Activated T-helper 1 cell treated with anti-CD3 and anti-CD28 coated beads, Interleukin-12 subunit alpha, Interleukin-12 subunit beta, Interleukin-2, Interleukin-4 antibody, amounts not matched to agents 30 ng/mL and 10 ng/mL and 1 ng/mL, durations not matched to agents 14 hours and 24 hours and 36 hours (primary cell): ENCODE measurements at regions of chr13 and their contacts with region 1.

Region 1: DNA sequence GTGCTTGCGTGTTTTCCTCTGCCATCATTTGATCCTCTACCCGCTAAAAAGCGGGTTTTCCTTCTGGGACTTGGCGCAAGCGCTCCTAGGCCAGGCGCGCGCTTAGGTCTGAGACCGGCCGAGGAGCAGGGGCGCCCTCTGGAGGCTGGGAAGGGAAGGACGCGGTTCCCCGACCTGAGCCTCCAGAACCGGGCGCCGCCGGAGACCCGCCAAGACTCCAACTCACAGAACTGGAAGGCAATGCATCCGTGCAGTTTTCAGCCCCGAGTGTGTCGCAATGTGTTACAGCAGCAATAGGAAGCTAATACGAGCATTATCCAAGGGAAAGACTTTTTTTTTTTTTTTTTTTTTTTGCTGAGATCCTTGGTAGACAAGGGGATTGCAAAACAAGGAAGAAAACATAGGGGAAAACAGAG is 190.9 kb downstream of the COL4A1 start:
- DNase-seq: peak; percentile 10
- H3K4me3 Mint-ChIP-seq: no peak overlapping the region
- H3K27ac Mint-ChIP-seq: no peak overlapping the region
- H3K4me1 Mint-ChIP-seq: no peaks in the 10 kb centered on the region
- H3K27me3 Mint-ChIP-seq: peaks cover 5% of the 10 kb centered on the region

Region 2: DNA sequence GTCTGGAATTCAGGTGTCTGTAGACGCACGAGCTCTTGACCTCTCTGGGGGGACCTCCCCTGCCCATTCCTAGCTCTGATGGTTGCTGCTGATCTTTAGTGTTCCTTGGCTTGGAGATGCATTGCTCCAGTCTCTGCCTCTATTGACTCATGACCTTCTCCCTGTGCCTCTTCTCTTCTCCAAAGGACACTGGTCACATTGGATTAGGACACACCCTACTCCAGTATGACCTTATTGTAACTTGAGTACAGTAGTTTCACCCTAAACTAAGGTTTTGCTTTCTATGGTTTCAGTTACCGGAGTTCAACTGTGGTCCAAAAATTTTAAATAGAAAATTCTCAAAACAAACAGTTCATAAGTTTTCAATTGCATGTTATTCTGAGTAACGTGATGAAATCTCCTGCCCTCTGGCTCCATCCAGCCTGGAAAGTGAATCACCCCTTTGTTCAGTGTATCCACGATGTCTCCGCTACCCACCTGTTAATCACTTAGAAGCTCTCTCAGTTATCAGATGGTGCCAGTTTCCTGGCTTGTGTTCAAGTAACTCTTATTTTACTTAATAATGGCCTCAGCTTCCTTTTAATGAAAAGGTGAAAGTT is 1213.4 kb before region 1 on chr13:
- intact Hi-C with region 1: no loop called
- DNase-seq: no peak
- H3K4me3 Mint-ChIP-seq: no peak overlapping the region
- H3K27ac Mint-ChIP-seq: no peak overlapping the region
- H3K4me1 Mint-ChIP-seq: peaks cover 7% of the 10 kb centered on the region
- H3K27me3 Mint-ChIP-seq: peaks cover 19% of the 10 kb centered on the region

Region 3: GRCh38 chr13:108961542-108962125 is 1154.4 kb before region 1 on chr13:
- intact Hi-C with region 1: loop called (anchors 1 kb)
- DNase-seq: no peak
- H3K4me3 Mint-ChIP-seq: no peak overlapping the region
- H3K27ac Mint-ChIP-seq: no peak overlapping the region
- H3K4me1 Mint-ChIP-seq: peaks cover 4% of the 10 kb centered on the region
- H3K27me3 Mint-ChIP-seq: peaks cover 4% of the 10 kb centered on the region

Region 4: DNA sequence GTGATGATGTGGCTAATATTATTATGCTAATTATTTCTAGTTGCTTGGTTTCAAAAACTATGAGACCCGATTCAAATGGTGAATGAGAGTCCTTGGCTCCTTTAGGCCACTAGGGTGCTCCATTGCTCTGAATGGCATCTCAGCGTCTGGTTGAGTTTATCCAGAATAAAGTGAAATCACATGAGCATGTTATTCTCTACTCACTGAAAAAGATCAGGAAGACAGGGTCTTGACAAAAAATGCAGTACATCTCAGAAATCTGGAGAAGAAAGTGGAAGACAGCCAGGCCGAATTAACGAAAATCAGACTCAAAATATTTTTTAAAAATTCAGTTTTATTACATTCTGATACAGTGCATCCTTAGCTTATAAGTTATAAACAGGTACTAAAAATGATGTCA is 970.4 kb before region 1 on chr13:
- intact Hi-C with region 1: loop called (anchors 10 kb)
- DNase-seq: no peak
- H3K4me3 Mint-ChIP-seq: no peak overlapping the region
- H3K27ac Mint-ChIP-seq: no peak overlapping the region
- H3K4me1 Mint-ChIP-seq: no peaks in the 10 kb centered on the region
- H3K27me3 Mint-ChIP-seq: peaks cover 18% of the 10 kb centered on the region